ENCODE measurements at regions of chr3 and their contacts with region 1.

Region 1: DNA sequence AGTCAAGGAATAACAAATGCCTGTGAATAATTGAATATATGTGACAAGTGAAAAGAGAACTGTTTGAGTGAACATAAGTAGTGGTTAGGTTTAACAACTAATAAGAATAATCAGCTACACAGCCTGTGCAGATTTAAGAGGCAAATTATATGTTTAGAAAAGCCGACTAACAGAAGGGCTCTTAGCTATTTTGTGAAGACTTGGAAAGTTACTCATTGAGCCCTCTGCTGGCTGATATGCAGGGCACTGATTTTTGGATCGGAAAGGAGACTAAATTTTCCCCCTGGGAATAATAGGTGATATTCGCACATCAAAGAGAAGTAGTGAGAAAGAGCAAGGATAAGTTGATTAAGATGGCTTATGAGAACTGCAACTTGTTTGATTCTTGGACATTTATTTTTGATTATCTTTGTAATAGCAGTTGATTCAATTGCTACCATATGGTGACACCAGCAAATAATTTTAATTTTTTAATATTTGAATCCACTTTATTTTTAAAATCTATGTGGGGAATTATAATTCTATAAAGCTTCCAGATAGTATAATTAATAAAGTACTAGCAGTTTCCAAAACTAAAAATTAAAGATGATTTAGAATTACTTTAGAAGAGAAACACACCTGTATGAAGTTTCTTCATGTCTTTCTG is 156.2 kb downstream of the NLGN1 start:
- DNase-seq: no peak
- ATAC-seq: no peak

Region 2: DNA sequence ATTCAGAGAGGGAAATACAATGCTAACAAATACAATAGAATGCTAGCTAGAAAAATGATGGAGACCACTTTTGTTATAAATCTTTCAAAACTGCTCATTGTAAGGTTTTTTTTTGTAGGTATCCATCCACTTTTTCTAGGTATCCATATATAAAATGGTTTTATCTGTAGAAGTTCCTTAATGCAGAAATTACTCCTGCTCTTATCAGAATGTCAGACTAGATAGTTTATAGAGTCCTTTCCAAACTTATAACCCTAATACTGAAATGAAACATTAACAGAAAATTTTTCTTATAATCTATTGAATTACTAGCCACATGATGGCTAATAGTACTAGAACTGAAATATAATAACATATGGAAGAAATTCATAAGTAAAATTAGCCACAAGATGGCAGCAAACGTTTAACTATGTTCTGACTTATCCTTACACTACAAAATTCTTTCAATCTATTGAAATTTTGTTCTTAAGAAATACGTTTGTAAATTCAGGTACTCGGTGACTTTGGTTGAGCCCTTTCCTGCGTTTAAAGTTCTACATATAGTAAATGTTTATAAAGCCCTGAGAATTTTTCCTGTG is 744.7 kb before region 1 on chr3:
- intact Hi-C with region 1: loop called (anchors 5 kb)
- DNase-seq: no peak
- ATAC-seq: no peak

Region 3: GRCh38 chr3:172982736-172983364 is 570.9 kb before region 1 on chr3:
- intact Hi-C with region 1: loop called (anchors 10 kb)
- DNase-seq: no peak
- ATAC-seq: peak; percentile 50

Region 4: GRCh38 chr3:173395412-173396181 is 158.2 kb before region 1 on chr3:
- intact Hi-C with region 1: loop called (anchors 5 kb)
- DNase-seq: peak; percentile 93
- ATAC-seq: peak; percentile 96

Region 5: DNA sequence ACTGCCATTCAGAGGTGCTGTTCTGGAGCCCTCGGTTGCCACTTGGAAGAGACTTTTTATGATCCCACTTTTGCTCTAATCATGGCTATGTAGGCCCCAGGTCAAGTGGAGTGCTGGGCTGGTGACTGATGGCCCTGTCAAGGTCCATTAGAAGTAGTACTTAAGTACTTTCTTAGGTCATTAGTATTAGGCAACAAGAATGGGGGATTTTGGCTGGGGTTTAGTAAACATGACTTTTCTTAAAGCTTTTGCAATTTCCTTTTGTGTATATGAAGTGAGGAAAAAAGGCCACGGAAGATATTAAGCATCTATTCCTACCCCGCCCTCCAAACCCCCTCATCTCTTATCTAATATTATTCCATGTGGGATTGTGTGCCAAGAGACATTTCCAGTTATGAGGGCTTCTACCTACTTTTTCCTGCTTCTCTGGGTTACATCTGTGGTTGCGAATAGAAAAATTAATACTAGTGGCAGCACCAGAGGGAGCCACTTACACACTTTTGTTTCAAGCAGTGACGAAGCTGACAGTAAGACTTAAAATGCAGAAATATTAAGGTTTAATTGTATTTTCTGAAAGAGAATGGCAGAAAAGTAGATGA is 142.3 kb before region 1 on chr3:
- intact Hi-C with region 1: loop called (anchors 2 kb)
- DNase-seq: no peak
- ATAC-seq: peak; percentile 73

Region 6: GRCh38 chr3:173622166-173622565 is 68.4 kb after region 1 on chr3:
- intact Hi-C with region 1: no loop called
- DNase-seq: no peak
- ATAC-seq: no peak

Measured in Right ventricle myocardium inferior (tissue), 1 donor.